MCF 10A (cell line): ENCODE measurements at regions of chr18 and their contacts with region 1.

Region 1: GRCh38 chr18:2223849-2224248 is 347.5 kb downstream of the METTL4 start:
- DNase-seq: peak; percentile 63
- H3K4me3 Mint-ChIP-seq: peak overlapping the region; percentile 43
- H3K27ac Mint-ChIP-seq: no peak overlapping the region
- H3K4me1 Mint-ChIP-seq: peaks cover 15% of the 10 kb centered on the region
- H3K27me3 Mint-ChIP-seq: no peaks in the 10 kb centered on the region
- CTCF ChIP-seq: peak; percentile 76

Region 2: DNA sequence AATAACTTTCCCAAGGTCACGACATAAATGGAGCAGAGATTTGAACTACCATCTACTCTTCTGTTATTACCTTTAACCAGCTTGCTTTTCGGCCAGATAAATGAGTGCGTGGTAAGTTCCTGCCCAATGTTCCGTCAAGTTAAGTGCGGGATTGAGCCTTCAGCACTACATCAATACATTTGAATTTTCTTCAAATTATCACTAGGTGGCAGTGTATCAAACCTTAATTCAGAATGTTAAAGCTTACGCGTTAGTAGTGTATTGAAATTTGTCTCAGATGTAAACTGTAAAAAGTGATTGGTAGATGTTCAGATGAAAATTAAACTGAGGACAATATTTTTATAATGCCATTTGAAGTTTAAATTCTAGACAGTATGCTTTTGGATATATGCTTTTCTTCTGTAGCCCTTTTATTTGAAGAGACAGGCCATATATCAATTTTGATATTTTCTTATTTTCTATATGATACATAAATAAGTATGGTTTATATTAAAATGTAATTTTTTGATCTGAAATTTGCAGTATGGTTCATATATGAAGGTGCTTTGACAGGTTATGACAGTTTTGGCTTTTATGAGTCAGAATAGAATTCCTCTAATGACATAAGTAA is 637.9 kb before region 1 on chr18:
- CTCF ChIA-PET with region 1: interaction called, 28 read pairs
- POLR2A ChIA-PET with region 1: no interaction called
- intact Hi-C with region 1: loop called (anchors 1 kb)
- DNase-seq: peak; percentile 45
- H3K4me3 Mint-ChIP-seq: no peak overlapping the region
- H3K27ac Mint-ChIP-seq: no peak overlapping the region
- H3K4me1 Mint-ChIP-seq: peaks cover 5% of the 10 kb centered on the region
- H3K27me3 Mint-ChIP-seq: no peaks in the 10 kb centered on the region
- CTCF ChIP-seq: peak; percentile 39

Region 3: GRCh38 chr18:1914490-1914889 is 309.4 kb before region 1 on chr18:
- CTCF ChIA-PET with region 1: interaction called, 5 read pairs
- POLR2A ChIA-PET with region 1: no interaction called
- intact Hi-C with region 1: loop called (anchors 2 kb)
- DNase-seq: peak; percentile 50
- H3K4me3 Mint-ChIP-seq: no peak overlapping the region
- H3K27ac Mint-ChIP-seq: no peak overlapping the region
- H3K4me1 Mint-ChIP-seq: peaks cover 11% of the 10 kb centered on the region
- H3K27me3 Mint-ChIP-seq: no peaks in the 10 kb centered on the region
- CTCF ChIP-seq: peak; percentile 60

Region 4: DNA sequence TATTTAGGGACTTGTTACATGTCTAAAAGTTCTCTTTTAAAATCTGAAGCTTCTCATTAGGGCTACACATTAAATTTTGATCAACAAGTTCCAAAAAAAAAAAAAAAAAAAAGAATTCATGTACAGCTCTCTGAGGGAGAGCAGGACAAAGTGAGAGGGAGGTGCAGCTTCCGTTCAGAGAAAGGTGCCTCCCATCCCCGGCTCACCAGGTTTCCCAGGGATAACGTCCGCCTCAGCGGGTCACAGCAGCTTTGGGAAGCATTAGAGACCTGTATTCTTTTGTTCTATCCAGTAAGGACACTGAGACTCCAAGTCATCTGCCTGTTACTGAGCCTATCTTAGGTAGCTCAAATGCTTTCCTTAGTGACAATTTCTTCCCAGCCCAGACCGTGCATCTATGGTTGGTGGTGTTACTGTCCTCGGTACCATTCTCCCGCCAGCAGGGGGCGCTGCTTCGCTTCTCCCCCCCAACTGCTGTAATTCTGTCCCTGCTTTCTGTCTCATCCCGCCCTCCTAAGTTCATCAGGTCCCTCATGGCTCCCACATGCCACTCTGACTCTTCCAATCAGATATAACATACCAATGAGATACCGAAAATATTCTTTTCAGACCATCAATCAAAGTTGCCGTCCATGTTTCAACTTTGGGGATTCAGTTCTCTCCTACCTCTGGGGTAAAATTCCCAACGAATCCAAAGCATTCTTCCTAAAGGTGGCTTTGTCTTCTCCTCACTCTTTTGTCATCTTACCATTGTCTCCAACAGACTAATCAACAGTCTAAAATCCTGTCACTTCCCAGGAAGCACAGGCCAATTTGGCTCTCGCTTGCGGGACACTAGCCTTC is 119.0 kb before region 1 on chr18:
- CTCF ChIA-PET with region 1: interaction called, 166 read pairs
- POLR2A ChIA-PET with region 1: interaction called, 4 read pairs
- intact Hi-C with region 1: loop called (anchors 1 kb)
- DNase-seq: peak; percentile 68
- H3K4me3 Mint-ChIP-seq: no peak overlapping the region
- H3K27ac Mint-ChIP-seq: no peak overlapping the region
- H3K4me1 Mint-ChIP-seq: peaks cover 6% of the 10 kb centered on the region
- H3K27me3 Mint-ChIP-seq: no peaks in the 10 kb centered on the region
- CTCF ChIP-seq: peak; percentile 81

Region 5: GRCh38 chr18:2204736-2205135 is 19.1 kb before region 1 on chr18:
- CTCF ChIA-PET with region 1: interaction called, 15 read pairs
- POLR2A ChIA-PET with region 1: no interaction called
- intact Hi-C with region 1: no loop called
- DNase-seq: no peak
- H3K4me3 Mint-ChIP-seq: no peak overlapping the region
- H3K27ac Mint-ChIP-seq: no peak overlapping the region
- H3K4me1 Mint-ChIP-seq: no peaks in the 10 kb centered on the region
- H3K27me3 Mint-ChIP-seq: no peaks in the 10 kb centered on the region
- CTCF ChIP-seq: no peak

Region 6: DNA sequence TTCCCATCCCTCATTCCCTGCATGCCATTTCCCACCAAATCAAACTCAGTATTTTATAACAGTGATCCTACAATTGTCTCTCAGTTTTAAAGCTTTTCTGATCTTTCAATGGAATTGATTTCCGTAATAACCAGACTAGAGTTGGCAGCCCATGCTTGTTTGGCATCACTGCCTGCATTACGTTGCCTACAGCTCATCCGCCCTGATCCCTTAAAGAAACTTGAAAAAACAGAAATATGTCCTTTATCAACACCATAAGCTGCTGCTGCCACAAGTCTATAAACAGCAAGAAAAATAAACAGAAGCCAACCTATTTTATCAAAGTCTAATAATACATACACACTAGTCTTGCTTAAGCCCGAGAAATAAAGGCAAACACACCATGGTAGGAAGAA is 16.5 kb after region 1 on chr18:
- CTCF ChIA-PET with region 1: interaction called, 12 read pairs
- POLR2A ChIA-PET with region 1: interaction called, 6 read pairs
- intact Hi-C with region 1: no loop called
- DNase-seq: no peak
- H3K4me3 Mint-ChIP-seq: peak overlapping the region; percentile 42
- H3K27ac Mint-ChIP-seq: peak overlapping the region; percentile 78
- H3K4me1 Mint-ChIP-seq: peaks cover 25% of the 10 kb centered on the region
- H3K27me3 Mint-ChIP-seq: no peaks in the 10 kb centered on the region
- CTCF ChIP-seq: no peak

Region 7: GRCh38 chr18:2547477-2548087 is 323.7 kb after region 1 on chr18:
- CTCF ChIA-PET with region 1: interaction called, 31 read pairs
- POLR2A ChIA-PET with region 1: interaction called, 4 read pairs
- intact Hi-C with region 1: loop called (anchors 2 kb)
- DNase-seq: peak; percentile 55
- H3K4me3 Mint-ChIP-seq: no peak overlapping the region
- H3K27ac Mint-ChIP-seq: peak overlapping the region; percentile 23
- H3K4me1 Mint-ChIP-seq: no peaks in the 10 kb centered on the region
- H3K27me3 Mint-ChIP-seq: no peaks in the 10 kb centered on the region
- CTCF ChIP-seq: peak; percentile 58